ENCODE measurements at regions of chr15 and their contacts with region 1.

Region 1: DNA sequence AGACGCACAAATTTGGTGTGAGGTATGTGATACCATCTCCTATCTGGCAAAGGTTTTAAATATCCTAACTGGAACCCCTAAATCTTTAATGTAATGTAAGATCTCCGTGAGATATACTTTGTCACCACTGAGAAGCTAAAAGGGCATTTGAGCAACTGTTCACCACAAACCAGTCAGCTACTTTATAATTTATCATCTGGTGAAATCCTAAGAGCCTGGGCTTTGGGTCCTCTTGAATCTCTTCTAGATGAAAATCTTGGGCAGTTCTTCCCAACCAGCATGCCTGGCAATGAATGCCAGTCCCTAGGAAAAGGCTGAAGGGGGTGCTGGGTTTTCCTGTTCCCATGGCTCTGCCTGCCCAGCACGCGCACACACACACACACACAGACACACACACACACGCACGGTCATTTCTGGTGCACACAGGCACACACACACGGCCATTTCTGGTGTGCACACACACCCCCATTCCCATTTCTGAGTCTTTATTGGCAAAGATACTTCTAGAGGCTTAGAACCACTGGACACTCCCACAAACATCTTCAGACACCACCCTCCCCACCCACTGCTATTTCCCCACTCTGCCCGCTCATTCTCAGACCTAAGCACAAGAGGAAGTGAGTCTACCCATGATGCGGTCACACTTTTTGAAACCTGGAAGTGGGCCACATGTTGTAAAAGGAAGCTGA is 72.6 kb downstream of the MYO1E start:
- DNase-seq: peak; percentile 84
- H3K4me3 Mint-ChIP-seq: peak overlapping the region; percentile 28
- H3K27ac Mint-ChIP-seq: peak overlapping the region; percentile 81
- H3K4me1 Mint-ChIP-seq: peaks cover 66% of the 10 kb centered on the region
- H3K27me3 Mint-ChIP-seq: peaks cover 3% of the 10 kb centered on the region

Region 2: GRCh38 chr15:59158701-59159034 is 141.4 kb before region 1 on chr15:
- CTCF ChIA-PET with region 1: no interaction called
- POLR2A ChIA-PET with region 1: no interaction called
- DNase-seq: no peak
- H3K4me3 Mint-ChIP-seq: no peak overlapping the region
- H3K27ac Mint-ChIP-seq: no peak overlapping the region
- H3K4me1 Mint-ChIP-seq: no peaks in the 10 kb centered on the region
- H3K27me3 Mint-ChIP-seq: no peaks in the 10 kb centered on the region

Region 3: GRCh38 chr15:59274126-59274970 is 25.7 kb before region 1 on chr15:
- CTCF ChIA-PET with region 1: interaction called, 4 read pairs
- POLR2A ChIA-PET with region 1: interaction called, 26 read pairs
- DNase-seq: peak; percentile 42
- H3K4me3 Mint-ChIP-seq: no peak overlapping the region
- H3K27ac Mint-ChIP-seq: peak overlapping the region; percentile 64
- H3K4me1 Mint-ChIP-seq: peaks cover 62% of the 10 kb centered on the region
- H3K27me3 Mint-ChIP-seq: peaks cover 19% of the 10 kb centered on the region

Region 4: DNA sequence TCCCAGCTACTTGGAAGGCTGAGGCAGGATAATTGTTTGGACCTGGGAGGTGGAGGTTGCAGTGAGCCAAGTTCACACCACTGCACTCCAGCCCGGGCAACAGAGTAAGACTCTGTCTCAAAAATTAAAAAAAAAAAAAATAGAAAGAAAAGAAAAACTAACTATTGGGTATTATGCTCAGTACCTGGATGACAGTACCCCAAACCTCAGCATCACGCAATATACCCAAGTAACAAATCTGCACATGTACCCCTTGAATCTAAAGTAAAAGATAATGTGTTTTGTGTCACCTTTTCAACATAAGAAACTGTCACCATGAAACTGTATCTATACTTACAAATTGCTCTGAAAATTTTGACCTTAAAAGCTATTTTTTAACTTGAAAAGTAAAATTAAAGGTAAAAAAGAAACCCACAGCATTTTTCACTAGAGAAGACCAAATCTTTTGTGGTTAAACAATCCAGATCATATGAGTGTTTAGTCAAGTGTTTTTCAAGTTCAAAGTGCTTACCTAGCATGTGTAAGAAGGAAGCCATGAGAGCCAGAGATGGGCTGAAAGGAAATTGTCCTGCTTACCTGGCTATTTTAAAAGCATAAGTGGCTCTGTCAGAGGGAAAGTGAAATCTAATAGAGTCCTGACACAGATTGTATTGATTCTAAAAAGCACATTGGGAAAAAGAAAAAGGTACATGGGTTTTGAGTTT is 22.1 kb after region 1 on chr15:
- CTCF ChIA-PET with region 1: no interaction called
- POLR2A ChIA-PET with region 1: interaction called, 12 read pairs
- DNase-seq: no peak
- H3K4me3 Mint-ChIP-seq: no peak overlapping the region
- H3K27ac Mint-ChIP-seq: peak overlapping the region; percentile 71
- H3K4me1 Mint-ChIP-seq: peaks cover 27% of the 10 kb centered on the region
- H3K27me3 Mint-ChIP-seq: peaks cover 45% of the 10 kb centered on the region

Region 5: DNA sequence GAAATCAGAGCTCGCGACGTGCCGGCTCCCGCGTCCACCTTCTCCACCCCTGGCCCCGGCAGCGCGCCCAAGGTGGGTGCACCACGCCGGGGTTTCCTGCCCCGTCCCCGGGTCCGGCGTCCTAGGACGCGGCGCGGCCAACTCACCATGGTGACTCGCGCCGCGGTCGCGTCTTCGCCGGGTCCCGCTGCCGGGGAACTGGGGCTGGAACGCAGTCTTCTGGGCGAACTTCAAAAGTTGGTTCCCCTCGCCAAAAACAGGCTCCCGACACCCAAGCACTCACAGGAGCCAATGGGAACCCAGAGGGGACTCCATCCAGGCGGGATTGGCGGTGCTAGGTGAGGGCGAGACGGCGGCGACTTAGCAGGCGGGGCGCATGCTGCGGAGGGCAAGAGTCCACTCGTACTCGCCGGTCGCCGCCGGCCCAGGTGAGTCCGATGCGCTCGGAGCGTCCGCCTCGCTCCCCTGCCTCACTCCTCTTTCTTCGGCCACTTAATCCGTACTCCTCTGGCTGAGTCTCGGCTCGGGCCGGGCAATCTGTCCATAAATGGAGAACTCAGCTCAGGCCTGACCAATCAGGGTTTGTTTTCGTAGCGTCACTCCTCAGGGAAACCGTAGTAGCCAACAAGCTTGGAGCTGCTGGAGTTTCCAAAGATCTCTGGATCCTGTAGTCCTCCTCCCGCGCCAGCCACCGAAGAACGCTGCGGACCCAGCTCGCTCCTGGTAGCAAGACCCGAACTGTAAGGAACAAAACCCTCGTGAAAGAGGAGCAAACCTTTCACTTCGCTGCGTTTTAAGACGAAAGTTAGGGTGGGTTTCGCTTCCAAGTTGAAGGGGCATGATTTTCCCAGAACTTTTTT is 72.5 kb after region 1 on chr15 and contains the start of gene MYO1E:
- CTCF ChIA-PET with region 1: no interaction called
- POLR2A ChIA-PET with region 1: no interaction called
- DNase-seq: peak; percentile 44
- H3K4me3 Mint-ChIP-seq: peak within 1 kb of the TSS; percentile 82
- H3K27ac Mint-ChIP-seq: no peak within 1 kb of the TSS
- H3K4me1 Mint-ChIP-seq: peaks cover 32% of the 10 kb centered on the region
- H3K27me3 Mint-ChIP-seq: peaks cover 55% of the 10 kb centered on the region
- total RNA-seq, gene MYO1E: 40.8 to 46.1 TPM